Activated naive CD4-positive, alpha-beta T cell treated with anti-CD3 and anti-CD28 coated beads for 36 hours (primary cell): ENCODE measurements at regions of chr5 and their contacts with region 1.

Region 1: GRCh38 chr5:148179234-148179824 is 11.0 kb downstream of the SPINK14 start:
- DNase-seq: peak; percentile 11
- H3K4me3 Mint-ChIP-seq: no peak overlapping the region
- H3K27ac Mint-ChIP-seq: no peak overlapping the region
- H3K4me1 Mint-ChIP-seq: no peaks in the 10 kb centered on the region
- H3K27me3 Mint-ChIP-seq: peaks cover 11% of the 10 kb centered on the region

Region 2: DNA sequence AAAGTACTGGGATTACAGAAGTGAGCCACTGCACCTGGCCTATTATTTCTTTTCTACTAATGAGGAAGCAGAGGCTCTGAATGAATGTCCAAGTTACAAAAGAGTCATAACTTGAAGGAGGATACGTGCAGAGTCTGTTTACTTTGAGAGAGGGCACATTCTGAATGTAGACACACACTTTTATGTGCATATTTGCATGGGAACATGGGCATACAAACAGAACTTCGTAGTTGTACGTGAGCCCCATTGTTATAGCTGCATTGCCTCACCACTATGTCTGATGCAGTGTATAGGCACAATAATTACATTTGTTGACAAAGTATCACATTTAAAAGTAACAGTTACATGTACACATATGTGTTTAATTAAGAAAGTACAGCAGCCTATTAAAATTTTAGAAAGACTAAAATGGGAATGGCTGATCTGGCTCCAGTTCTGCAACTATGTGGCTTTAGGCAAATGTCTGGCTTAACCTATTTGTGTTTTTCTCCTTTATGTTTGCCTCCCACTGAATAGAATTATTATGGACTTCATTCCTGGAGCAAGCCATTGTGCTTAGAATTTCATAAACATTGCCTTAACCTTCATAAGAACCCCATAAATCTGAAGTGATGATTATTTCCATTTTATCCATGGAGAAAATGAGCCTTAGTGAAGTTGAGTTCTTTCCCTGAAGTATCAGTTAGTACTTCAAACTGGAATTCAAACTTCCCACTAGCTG is 666.5 kb before region 1 on chr5:
- CTCF ChIA-PET with region 1: no interaction called
- intact Hi-C with region 1: no loop called
- DNase-seq: no peak
- H3K4me3 Mint-ChIP-seq: no peak overlapping the region
- H3K27ac Mint-ChIP-seq: no peak overlapping the region
- H3K4me1 Mint-ChIP-seq: peaks cover 6% of the 10 kb centered on the region
- H3K27me3 Mint-ChIP-seq: peaks cover 27% of the 10 kb centered on the region

Region 3: DNA sequence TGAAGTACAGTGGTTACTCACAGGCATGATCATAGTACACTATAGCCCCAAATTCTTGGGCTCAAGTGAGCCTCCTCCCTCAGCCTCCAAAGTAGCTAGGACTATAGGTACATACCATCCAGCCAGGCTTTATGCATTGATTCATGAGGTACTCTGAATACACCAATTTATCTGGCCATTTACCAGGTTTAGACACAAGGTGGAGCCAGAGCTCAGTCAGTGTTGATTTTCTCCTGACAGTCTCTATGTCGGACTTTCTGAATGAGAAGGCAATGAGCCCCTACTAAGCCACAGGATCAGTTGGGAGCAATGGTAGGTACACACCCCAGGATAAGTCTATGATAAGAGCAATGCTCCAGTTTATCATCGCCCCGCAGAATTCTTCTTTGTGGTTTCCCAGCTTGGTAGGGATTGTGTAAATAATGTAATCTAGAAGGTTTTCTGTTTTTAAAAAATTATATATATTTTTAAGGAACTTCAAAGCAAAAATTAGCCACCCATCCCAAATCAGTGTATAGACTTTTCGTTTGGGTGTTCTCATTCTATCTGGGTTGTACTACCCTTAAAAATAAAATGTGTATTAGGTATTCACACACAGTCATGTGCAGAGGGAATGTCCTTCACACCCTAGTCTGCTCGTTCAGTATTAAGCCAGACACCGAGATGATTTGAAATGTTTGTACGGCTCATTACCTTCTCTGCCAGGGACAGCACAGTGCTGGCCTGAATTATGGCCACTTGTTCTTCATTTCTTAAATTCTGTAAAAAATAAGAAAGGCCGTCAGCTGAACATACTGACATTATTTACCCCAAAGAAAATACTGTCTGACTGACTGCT is 551.1 kb before region 1 on chr5:
- CTCF ChIA-PET with region 1: no interaction called
- intact Hi-C with region 1: loop called (anchors 5 kb)
- DNase-seq: peak; percentile 64
- H3K4me3 Mint-ChIP-seq: no peak overlapping the region
- H3K27ac Mint-ChIP-seq: no peak overlapping the region
- H3K4me1 Mint-ChIP-seq: no peaks in the 10 kb centered on the region
- H3K27me3 Mint-ChIP-seq: peaks cover 9% of the 10 kb centered on the region

Region 4: DNA sequence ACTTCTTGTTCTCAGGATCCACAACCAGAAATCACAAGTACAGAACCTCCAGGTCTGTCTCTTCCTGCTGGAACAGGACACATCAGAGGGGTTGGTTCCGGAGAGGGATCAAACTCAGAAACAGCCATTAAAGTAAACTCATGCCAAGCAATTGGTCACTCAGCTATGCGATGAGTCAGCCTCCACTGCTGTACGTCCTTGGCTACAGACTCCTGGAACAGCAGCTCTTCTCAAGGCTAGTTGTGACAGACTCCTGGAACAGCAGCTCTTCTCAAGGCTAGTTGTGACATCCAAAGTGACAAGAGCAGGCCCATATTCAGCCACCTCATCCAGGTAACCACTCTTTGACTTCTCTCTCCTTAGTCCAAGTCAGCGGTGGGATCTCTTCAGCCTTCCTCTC is 89.2 kb after region 1 on chr5 and contains the start of gene SPINK13:
- CTCF ChIA-PET with region 1: no interaction called
- intact Hi-C with region 1: no loop called
- DNase-seq: no peak
- H3K4me3 Mint-ChIP-seq: no peak within 1 kb of the TSS
- H3K27ac Mint-ChIP-seq: no peak within 1 kb of the TSS
- H3K4me1 Mint-ChIP-seq: no peaks in the 10 kb centered on the region
- H3K27me3 Mint-ChIP-seq: peaks cover 2% of the 10 kb centered on the region
- total RNA-seq, gene SPINK13: not detected

Region 5: GRCh38 chr5:148290271-148291195 is 111.2 kb after region 1 on chr5:
- CTCF ChIA-PET with region 1: no interaction called
- intact Hi-C with region 1: loop called (anchors 1 kb)
- DNase-seq: no peak
- H3K4me3 Mint-ChIP-seq: no peak overlapping the region
- H3K27ac Mint-ChIP-seq: no peak overlapping the region
- H3K4me1 Mint-ChIP-seq: no peaks in the 10 kb centered on the region
- H3K27me3 Mint-ChIP-seq: no peaks in the 10 kb centered on the region

Region 6: DNA sequence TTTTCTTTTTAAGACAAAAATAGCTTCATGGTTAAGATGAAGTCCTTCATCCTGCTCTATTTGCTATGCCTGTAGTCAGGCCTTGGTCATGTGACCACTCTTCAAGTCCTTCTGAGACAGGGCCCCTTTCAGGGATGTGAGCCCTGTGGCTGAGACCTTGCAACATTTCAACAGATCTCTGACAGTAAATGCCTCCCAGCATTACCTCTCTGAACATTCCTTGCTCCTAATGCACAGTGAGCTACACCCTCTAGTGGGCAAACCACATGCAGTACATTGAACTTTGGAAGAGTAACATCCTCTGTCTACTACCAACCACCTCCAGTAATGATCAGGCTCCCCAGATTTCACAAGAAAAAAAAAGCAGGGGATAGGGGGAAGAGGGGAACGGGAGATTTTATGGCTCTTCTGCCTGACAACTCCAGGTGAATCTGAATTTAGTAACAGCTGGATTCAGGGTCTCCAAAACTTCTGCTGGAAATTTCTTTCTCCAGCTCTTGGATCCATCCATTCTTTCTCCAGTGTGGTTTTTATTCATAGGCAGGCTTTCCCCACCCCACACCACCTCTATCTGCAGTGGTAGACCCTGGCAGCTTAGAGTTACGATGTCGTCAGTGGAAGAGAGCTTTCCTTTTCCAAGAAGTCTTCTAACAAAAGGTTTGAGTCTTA is 195.5 kb after region 1 on chr5:
- CTCF ChIA-PET with region 1: interaction called, 14 read pairs
- intact Hi-C with region 1: loop called (anchors 1 kb)
- DNase-seq: peak; percentile 29
- H3K4me3 Mint-ChIP-seq: no peak overlapping the region
- H3K27ac Mint-ChIP-seq: no peak overlapping the region
- H3K4me1 Mint-ChIP-seq: peaks cover 6% of the 10 kb centered on the region
- H3K27me3 Mint-ChIP-seq: no peaks in the 10 kb centered on the region

Region 7: DNA sequence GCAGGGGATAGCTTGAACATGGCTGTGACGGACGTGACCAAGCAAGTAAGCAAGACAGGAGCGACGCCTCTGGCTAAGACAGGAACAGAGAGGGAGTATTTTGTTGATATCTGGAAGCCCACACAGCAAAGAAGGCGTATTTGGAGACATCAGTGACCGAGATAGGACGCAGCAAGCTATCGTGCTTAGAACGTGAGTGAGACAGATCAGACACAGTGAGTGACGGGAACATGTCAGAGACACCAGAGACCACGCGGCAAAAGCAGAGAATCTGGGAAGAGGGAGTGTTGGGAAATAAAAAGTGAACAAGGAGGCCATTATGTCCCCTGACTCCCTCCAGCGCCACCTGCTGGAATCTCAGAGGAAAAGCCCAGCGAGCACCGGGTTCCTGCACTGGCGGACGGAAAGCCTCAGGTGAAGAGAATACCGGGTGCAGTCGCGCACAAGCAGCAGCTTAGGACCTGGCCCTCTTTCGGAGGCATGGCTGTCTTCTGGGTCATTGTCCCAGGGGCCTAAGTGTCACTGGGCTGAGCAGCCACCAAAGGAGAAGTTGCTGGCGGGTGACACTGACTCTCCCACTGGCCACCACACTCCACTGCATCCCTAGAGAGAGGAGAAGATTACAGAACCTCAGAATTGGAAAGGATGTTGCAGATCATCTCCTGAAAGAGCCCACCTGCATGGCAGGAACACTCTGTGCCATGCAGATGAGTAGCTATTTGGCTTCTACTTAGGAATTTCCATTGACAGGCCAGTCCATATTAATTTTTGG is 303.5 kb after region 1 on chr5:
- CTCF ChIA-PET with region 1: interaction called, 6 read pairs
- intact Hi-C with region 1: loop called (anchors 1 kb)
- DNase-seq: peak; percentile 82
- H3K4me3 Mint-ChIP-seq: no peak overlapping the region
- H3K27ac Mint-ChIP-seq: no peak overlapping the region
- H3K4me1 Mint-ChIP-seq: peaks cover 3% of the 10 kb centered on the region
- H3K27me3 Mint-ChIP-seq: peaks cover 26% of the 10 kb centered on the region